ENCODE measurements at regions of chrX and their contacts with region 1.

Region 1: DNA sequence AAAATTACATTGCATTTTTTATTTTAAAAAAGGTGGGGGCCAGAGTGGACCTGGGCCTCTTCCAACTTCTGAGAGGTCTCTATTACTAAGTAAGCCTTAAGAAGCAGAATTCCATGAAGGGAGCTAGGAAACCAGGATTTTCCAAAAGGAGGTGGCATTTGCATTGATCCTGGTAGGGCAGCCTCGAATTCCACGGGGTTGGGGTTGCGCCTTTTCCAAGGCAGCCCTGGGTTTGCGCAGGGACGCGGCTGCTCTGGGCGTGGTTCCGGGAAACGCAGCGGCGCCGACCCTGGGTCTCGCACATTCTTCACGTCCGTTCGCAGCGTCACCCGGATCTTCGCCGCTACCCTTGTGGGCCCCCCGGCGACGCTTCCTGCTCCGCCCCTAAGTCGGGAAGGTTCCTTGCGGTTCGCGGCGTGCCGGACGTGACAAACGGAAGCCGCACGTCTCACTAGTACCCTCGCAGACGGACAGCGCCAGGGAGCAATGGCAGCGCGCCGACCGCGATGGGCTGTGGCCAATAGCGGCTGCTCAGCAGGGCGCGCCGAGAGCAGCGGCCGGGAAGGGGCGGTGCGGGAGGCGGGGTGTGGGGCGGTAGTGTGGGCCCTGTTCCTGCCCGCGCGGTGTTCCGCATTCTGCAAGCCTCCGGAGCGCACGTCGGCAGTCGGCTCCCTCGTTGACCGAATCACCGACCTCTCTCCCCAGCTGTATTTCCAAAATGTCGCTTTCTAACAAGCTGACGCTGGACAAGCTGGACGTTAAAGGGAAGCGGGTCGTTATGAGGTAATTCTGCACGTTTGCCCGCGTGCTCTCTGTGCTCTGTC is at the start of gene PGK1:
- DNase-seq: peak; percentile 90
- CTCF ChIP-seq: no peak

Region 2: GRCh38 chrX:77814210-77814609 is 289.6 kb before region 1 on chrX:
- in situ Hi-C with region 1: no loop called
- DNase-seq: no peak
- CTCF ChIP-seq: no peak

Region 3: DNA sequence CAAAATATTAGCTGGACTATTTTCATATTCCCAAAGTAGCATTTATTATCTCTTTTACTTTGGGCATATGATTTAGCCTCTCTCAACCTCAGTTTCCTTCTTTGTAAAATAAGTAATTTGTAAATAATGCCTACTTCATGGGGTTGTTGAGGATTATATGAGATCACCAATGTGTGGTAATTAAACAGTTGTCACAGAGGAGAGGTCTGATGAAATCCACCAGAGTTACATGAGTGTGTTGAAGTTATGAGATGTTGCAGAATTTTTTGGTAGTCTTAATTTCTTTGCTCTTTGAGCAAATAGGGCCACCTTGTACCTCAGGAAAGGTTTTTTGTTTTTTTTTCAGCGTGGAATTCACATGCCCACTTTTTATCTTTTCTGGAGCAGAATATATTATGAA is 203.1 kb before region 1 on chrX:
- in situ Hi-C with region 1: loop called (anchors 10 kb)
- DNase-seq: no peak
- CTCF ChIP-seq: no peak